AG04449 (cell line): ENCODE measurements at regions of chr5 and their contacts with region 1.

Region 1: DNA sequence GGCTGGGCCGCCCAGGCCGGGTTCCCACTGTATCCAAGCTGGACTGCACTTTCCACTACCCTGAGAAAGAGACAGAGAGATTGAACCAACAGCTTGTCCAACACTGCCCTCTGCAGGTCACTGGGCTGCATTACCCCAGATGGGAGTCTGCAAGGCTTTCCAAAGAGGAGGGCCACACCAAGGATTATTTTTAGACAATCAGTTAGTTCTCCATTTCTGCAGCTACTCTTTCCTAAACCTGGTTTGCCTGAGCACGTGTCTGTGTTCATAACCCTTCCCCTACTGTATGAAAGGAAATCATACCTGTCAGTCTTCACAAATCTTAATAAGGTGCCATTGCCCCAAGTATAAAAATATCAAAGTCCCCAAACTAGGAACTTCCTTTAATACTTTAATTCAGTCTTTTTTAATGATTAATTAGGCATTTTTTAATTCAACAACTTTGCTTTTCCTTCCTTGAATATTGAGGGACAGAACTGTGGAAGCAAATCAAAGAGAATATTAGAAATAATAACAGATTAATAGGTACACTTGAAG is 13.4 kb upstream of the FGF1 start:
- DNase-seq: no peak
- H3K4me3 ChIP-seq: no peak overlapping the region
- CTCF ChIP-seq: peak; percentile 87

Region 2: DNA sequence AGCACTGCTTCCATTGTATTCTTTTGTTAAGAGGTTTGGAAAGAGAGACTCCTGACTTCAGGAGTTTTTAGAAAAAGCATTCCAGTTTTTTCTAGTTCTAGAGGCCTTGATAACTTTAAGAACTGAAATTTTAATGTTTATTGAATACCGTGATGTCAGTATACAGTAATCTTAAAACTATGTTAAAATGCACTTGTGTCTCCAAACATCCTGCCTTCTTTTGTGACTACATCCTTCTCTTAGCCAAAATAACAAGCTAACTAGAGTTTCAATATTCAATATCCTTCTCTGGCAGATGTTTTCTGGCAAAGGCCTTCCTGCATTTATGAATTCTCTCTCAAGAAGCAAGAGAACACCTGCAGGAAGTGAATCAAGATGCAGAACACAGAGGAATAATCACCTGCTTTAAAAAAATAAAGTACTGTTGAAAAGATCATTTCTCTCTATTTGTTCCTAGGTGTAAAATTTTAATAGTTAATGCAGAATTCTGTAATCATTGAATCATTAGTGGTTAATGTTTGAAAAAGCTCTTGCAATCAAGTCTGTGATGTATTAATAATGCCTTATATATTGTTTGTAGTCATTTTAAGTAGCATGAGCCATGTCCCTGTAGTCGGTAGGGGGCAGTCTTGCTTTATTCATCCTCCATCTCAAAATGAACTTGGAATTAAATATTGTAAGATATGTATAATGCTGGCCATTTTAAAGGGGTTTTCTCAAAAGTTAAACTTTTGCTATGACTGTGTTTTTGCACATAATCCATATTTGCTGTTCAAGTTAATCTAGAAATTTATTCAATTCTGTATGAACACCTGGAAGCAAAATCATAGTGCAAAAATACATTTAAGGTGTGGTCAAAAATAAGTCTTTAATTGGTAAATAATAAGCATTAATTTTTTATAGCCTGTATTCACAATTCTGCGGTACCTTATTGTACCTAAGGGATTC is 547.5 kb before region 1 on chr5:
- CTCF ChIA-PET with region 1: interaction called, 14 read pairs
- POLR2A ChIA-PET with region 1: no interaction called
- DNase-seq: peak; percentile 41
- H3K4me3 ChIP-seq: no peak overlapping the region
- CTCF ChIP-seq: peak; percentile 62

Region 3: DNA sequence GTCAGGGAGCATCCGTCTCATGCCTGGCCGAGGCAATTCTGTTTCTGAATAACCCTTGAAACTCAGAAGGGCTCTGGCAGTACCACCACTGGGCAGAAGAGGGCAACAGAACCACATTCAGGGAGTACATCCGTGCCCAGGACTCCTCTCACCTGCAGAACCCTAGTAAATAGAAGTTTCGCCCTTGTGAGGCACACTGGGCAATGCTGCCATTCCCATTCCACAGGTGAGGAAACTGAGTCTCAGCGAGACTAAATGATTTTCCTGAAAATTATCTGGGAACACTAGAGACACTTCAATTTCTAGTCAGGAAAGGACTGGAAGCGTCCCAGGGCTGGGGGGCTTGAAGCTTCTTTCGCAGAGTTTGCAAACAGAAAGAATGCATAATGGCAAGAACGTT is 88.1 kb before region 1 on chr5:
- CTCF ChIA-PET with region 1: interaction called, 533 read pairs
- POLR2A ChIA-PET with region 1: no interaction called
- DNase-seq: no peak
- H3K4me3 ChIP-seq: no peak overlapping the region
- CTCF ChIP-seq: peak; percentile 94

Region 4: DNA sequence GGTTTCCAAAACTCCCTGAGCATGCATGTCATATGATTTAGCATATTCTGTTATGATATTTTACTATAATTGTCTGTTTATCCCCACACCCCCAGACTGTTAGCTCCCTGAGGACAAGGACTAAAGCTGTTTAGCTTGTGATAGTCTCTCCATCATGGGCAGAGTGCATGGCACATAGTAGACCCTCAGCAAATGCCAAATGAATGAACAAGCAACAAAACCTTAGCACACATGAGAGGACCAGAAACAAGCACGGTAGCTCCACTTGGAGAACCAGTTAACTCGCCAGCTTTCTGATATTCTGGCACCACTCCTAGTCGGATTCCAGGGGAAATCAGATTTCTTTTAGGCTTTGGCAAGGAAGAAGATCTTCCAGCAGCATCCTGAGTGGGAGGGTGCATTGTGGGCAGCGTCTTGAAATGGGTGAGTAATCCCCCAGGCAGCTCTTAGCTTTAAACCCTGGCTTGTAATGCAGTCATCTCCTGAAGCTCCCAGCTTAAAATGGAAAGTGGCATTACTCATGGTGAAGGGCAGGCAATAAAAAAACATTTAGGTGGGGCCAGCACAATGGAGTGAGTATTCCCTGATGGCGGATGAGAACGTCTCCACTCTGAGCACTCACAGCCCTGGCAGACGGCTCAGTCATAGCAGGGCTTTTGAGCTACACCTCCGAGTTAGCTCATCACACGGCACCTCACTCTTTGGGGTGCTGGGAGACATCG is 54.5 kb before region 1 on chr5:
- CTCF ChIA-PET with region 1: interaction called, 36 read pairs
- POLR2A ChIA-PET with region 1: no interaction called
- DNase-seq: peak; percentile 99
- H3K4me3 ChIP-seq: peak overlapping the region; percentile 42
- CTCF ChIP-seq: no peak

Region 5: GRCh38 chr5:142660731-142661130 is 38.5 kb before region 1 on chr5:
- CTCF ChIA-PET with region 1: interaction called, 482 read pairs
- POLR2A ChIA-PET with region 1: interaction called, 7 read pairs
- DNase-seq: no peak
- H3K4me3 ChIP-seq: no peak overlapping the region
- CTCF ChIP-seq: no peak

Region 6: GRCh38 chr5:142685418-142686209 is 13.6 kb before region 1 on chr5 and contains the start of gene FGF1:
- CTCF ChIA-PET with region 1: interaction called, 64 read pairs
- POLR2A ChIA-PET with region 1: no interaction called
- DNase-seq: no peak
- H3K4me3 ChIP-seq: no peak within 1 kb of the TSS
- CTCF ChIP-seq: no peak

Region 7: DNA sequence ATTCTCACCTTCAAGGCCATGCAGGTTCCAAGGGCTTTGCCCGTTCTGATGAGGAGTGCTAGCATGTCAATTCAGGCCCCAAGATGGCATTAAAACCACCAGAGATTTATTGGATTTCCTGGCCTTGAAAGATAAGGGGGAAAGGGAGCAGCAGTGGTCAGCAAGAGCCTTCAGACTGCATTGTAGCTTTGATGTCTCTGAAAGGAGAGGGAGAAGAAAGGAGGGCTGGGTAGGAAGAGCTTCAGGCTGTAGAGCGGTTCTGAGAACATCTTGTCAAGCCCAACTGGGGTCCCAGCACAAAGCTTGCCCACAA is 28.4 kb after region 1 on chr5:
- CTCF ChIA-PET with region 1: no interaction called
- POLR2A ChIA-PET with region 1: no interaction called
- DNase-seq: no peak
- H3K4me3 ChIP-seq: no peak overlapping the region
- CTCF ChIP-seq: no peak